Activated T-helper 2 cell treated with anti-CD3 and anti-CD28 coated beads, Interferon-gamma antibody, Interleukin-2, Interleukin-4, amounts not matched to agents 10 μg/mL and 5 μg/mL and 100 μg/mL, durations not matched to agents 14 hours and 24 hours and 36 hours (primary cell): ENCODE measurements at regions of chr14 and their contacts with region 1.

Region 1: DNA sequence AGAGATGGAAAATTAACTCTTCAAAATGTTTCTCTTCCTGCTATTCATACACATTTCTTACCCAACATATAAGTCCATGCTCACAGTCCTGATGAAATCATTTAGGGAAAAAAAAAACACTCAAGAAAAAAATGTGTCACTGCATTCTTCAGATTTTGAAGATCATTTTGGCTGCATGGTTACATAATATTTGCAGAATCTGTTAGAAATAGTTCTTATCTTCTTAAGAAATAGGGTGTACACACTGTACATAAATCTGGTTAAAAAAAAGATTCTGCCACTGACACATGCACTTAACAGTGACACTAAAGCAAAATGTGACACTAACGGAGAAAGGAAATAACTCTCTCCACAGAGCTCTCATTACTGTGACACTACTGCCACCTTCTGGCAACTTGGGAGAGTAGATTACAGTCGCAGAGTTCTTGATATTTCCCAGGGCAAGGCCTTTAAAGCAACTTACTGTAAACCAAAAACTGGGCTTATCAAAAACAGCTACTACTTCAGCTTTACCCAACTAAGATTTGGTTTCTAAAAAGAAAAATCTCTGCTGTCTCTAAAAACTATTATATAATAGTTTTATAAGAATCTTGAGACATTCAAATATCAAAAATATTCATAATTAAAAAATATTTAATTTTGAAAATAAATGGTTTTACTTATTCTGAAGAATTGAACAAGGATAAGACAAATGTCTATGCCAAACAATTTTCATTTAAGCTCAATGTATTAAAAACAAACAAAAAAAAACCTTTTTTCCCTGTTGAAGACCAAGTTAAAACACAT is 65.0 kb downstream of the SETD3 start:
- DNase-seq: peak; percentile 57
- H3K4me3 Mint-ChIP-seq: no peak overlapping the region
- H3K27ac Mint-ChIP-seq: no peak overlapping the region
- H3K4me1 Mint-ChIP-seq: peaks cover 24% of the 10 kb centered on the region
- H3K27me3 Mint-ChIP-seq: no peaks in the 10 kb centered on the region

Region 2: GRCh38 chr14:98819132-98819866 is 596.4 kb before region 1 on chr14:
- intact Hi-C with region 1: no loop called
- DNase-seq: no peak
- H3K4me3 Mint-ChIP-seq: no peak overlapping the region
- H3K27ac Mint-ChIP-seq: no peak overlapping the region
- H3K4me1 Mint-ChIP-seq: no peaks in the 10 kb centered on the region
- H3K27me3 Mint-ChIP-seq: peaks cover 8% of the 10 kb centered on the region

Region 3: DNA sequence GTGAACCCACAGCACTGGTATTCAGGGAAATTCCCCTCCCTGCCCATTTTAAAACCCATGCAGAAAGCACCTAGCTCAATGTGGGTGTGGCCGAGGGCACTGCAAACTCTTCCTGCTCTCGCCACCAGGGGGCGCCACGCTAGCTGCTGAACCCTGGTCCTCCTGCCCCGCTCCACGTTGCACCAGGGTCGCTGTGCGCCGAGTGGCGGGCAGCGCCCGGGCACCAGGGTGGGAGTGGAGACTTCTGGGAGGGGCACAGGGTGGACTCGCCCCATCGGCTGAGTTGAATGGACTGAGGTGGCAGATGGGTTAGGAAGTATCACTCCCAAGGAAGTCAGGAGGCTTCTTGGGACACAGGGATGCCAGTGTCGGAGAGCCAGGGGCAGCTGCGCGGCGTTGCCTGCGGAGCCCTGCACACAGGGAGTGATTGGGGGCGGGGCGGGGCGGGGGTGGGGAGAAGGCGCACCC is 95.5 kb before region 1 on chr14:
- intact Hi-C with region 1: loop called (anchors 1 kb)
- DNase-seq: peak; percentile 65
- H3K4me3 Mint-ChIP-seq: no peak overlapping the region
- H3K27ac Mint-ChIP-seq: no peak overlapping the region
- H3K4me1 Mint-ChIP-seq: peaks cover 8% of the 10 kb centered on the region
- H3K27me3 Mint-ChIP-seq: no peaks in the 10 kb centered on the region

Region 4: DNA sequence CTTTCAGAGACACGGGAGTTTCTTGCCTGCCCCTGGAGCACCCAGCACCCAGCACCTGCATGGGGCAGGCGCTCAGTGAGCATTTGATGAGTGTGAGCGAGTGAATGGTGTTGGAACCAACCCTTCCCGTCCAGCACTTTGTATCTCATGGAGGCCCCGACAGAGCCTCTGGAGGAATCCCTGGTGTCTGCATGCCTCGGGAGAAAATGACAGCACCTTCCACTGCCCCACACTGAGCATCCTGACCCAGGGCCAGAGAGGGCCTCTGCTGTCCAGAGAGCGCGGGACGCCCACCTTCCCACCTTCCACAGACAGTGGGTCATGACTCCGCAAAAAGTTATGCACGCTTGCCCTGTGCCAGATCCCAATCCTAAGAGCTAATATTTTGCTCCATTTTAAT is 40.7 kb before region 1 on chr14:
- intact Hi-C with region 1: no loop called
- DNase-seq: no peak
- H3K4me3 Mint-ChIP-seq: no peak overlapping the region
- H3K27ac Mint-ChIP-seq: no peak overlapping the region
- H3K4me1 Mint-ChIP-seq: no peaks in the 10 kb centered on the region
- H3K27me3 Mint-ChIP-seq: peaks cover 8% of the 10 kb centered on the region

Region 5: DNA sequence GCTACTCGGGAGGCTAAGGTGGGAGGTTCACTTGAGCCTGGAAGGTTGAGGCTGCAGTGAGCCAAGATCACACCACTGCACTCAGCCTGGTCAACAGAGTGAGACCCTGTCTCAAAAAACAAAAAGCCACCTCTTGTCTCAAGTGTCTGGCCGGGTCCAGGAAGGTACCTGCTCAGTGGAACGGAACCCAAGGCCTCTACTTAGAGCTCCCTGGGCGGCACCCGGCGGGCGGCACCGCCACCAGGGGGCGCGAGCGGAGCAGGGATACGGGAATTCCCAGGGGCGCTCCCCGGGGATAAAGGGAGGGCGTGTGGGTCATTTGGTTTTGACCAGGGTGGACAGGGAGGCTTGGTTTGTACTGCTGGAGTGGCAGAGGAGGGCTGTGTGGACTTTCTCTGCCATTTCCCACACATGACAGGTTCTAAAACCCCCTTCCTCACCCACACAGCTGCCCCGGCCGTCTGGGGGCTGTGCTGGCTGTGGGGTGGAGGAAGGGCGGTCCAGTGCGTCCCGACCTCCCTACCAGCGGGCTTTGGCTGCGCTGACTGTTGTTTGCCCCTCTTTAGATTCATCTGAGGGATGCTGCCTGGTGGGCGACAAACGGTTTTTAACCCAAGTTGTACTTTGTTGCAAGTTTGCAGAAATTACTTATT is 26.4 kb before region 1 on chr14:
- intact Hi-C with region 1: loop called (anchors 1 kb)
- DNase-seq: no peak
- H3K4me3 Mint-ChIP-seq: no peak overlapping the region
- H3K27ac Mint-ChIP-seq: no peak overlapping the region
- H3K4me1 Mint-ChIP-seq: no peaks in the 10 kb centered on the region
- H3K27me3 Mint-ChIP-seq: peaks cover 8% of the 10 kb centered on the region